Activated CD8-positive, alpha-beta T cell treated with anti-CD3 and anti-CD28 coated beads for 36 hours (primary cell): ENCODE measurements at regions of chr11 and their contacts with region 1.

Region 1: DNA sequence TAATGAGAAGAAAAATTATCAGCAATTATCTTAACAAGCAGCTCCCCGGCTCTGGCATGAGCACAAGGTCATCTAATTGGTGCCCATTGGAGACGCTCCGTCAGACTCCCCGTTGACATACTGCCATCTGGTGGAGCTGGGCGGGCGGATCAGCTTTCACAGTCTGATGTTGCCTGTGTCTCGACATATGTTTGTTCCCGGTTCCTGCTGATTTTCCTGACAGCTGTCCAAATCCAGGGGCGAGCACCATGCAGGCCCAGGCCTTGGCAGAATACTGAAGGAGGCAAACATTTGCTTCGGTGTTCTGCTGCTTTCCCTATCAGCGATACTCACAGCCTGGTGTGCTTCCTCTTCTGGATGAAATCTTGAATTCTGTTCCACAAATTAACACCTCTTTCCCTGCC is 43.8 kb upstream of the BARX2 start:
- DNase-seq: peak; percentile 81
- ATAC-seq: peak; percentile 85
- H3K4me3 Mint-ChIP-seq: no peak overlapping the region
- H3K27ac Mint-ChIP-seq: no peak overlapping the region
- H3K4me1 Mint-ChIP-seq: no peaks in the 10 kb centered on the region
- H3K27me3 Mint-ChIP-seq: no peaks in the 10 kb centered on the region
- CTCF ChIP-seq: peak; percentile 81

Region 2: DNA sequence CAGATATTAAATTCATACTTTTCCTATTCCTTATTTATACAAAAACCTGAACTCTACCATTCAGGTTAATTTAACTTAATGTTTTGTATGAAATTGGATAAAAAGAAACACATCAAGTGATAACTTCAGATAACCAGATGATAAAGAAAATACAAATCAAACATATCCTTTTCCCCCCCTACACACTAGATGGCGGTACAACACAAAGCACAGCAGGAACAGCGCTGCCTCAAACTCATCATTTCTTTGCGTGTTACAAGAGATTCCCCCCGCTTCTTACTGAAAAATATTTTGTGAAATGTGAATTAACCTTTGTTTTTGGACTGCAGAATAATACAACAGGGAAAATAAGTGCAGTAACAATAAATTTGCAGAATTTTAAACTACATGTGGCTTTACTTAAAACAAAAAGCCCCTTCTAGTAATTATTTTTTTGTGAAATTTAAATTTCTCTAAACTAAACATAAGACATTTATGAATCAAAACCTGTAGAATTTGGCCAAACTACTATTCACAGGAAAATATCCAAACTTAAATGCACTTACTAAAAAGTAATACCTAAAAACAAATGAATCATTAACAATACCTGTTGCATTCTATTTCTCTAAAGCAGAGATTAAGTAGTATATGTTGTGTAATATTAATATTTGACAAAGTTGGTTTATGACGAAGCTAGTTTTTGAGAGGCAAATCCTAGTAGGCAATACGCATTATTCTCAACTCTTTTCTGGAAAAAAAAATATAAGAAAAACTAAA is 214.1 kb before region 1 on chr11:
- CTCF ChIA-PET with region 1: interaction called, 70 read pairs
- POLR2A ChIA-PET with region 1: no interaction called
- intact Hi-C with region 1: loop called (anchors 1 kb)
- DNase-seq: peak; percentile 49
- ATAC-seq: no peak
- H3K4me3 Mint-ChIP-seq: no peak overlapping the region
- H3K27ac Mint-ChIP-seq: no peak overlapping the region
- H3K4me1 Mint-ChIP-seq: peaks cover 2% of the 10 kb centered on the region
- H3K27me3 Mint-ChIP-seq: no peaks in the 10 kb centered on the region
- CTCF ChIP-seq: peak; percentile 91

Region 3: GRCh38 chr11:129230006-129230405 is 101.9 kb before region 1 on chr11:
- CTCF ChIA-PET with region 1: interaction called, 14 read pairs
- POLR2A ChIA-PET with region 1: no interaction called
- intact Hi-C with region 1: loop called (anchors 5 kb)
- DNase-seq: no peak
- ATAC-seq: no peak
- H3K4me3 Mint-ChIP-seq: no peak overlapping the region
- H3K27ac Mint-ChIP-seq: no peak overlapping the region
- H3K4me1 Mint-ChIP-seq: no peaks in the 10 kb centered on the region
- H3K27me3 Mint-ChIP-seq: no peaks in the 10 kb centered on the region
- CTCF ChIP-seq: no peak

Region 4: DNA sequence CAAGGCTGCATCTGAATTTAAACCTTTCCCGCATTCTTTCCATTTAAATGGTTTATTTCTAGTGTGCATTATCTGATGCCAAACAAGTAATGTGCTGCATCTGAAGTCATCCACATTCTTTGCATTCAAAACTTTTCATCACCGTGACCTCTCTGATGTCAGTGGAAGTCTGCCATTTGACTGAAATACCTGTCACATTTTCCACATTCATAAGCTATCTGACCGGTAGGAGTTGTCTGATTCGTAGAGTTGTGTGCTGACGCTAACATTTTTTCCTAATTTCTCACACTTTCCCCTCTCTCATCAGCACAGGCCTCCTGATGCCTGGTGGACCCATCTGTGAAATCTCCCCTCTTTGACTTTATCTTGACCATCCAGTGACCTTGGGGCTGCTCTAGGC is 36.1 kb before region 1 on chr11:
- CTCF ChIA-PET with region 1: no interaction called
- POLR2A ChIA-PET with region 1: no interaction called
- intact Hi-C with region 1: no loop called
- DNase-seq: no peak
- ATAC-seq: no peak
- H3K4me3 Mint-ChIP-seq: no peak overlapping the region
- H3K27ac Mint-ChIP-seq: no peak overlapping the region
- H3K4me1 Mint-ChIP-seq: peaks cover 4% of the 10 kb centered on the region
- H3K27me3 Mint-ChIP-seq: peaks cover 3% of the 10 kb centered on the region
- CTCF ChIP-seq: no peak

Region 5: GRCh38 chr11:129317571-129317970 is 14.3 kb before region 1 on chr11:
- CTCF ChIA-PET with region 1: interaction called, 18 read pairs
- POLR2A ChIA-PET with region 1: no interaction called
- intact Hi-C with region 1: no loop called
- DNase-seq: no peak
- ATAC-seq: no peak
- H3K4me3 Mint-ChIP-seq: no peak overlapping the region
- H3K27ac Mint-ChIP-seq: no peak overlapping the region
- H3K4me1 Mint-ChIP-seq: no peaks in the 10 kb centered on the region
- H3K27me3 Mint-ChIP-seq: no peaks in the 10 kb centered on the region
- CTCF ChIP-seq: no peak